Psoas muscle (tissue), 8 donors: ENCODE measurements at regions of chr3 and their contacts with region 1.

Region 1: GRCh38 chr3:186570096-186570940 is at the start of gene DNAJB11:
- DNase-seq: peak; percentile 99 to 100
- ATAC-seq: peak; percentile 92 to 95 (median 94)
- H3K4me3 ChIP-seq: peak within 1 kb of the TSS; percentile 87
- H3K27ac ChIP-seq: peak within 1 kb of the TSS; percentile 95
- H3K4me1 ChIP-seq: peaks cover 30% of the 10 kb centered on the region
- H3K27me3 ChIP-seq: no peaks in the 10 kb centered on the region
- CTCF ChIP-seq: no peak
- total RNA-seq, gene DNAJB11: 10.3 to 24.2 (median 17.4) TPM

Region 2: DNA sequence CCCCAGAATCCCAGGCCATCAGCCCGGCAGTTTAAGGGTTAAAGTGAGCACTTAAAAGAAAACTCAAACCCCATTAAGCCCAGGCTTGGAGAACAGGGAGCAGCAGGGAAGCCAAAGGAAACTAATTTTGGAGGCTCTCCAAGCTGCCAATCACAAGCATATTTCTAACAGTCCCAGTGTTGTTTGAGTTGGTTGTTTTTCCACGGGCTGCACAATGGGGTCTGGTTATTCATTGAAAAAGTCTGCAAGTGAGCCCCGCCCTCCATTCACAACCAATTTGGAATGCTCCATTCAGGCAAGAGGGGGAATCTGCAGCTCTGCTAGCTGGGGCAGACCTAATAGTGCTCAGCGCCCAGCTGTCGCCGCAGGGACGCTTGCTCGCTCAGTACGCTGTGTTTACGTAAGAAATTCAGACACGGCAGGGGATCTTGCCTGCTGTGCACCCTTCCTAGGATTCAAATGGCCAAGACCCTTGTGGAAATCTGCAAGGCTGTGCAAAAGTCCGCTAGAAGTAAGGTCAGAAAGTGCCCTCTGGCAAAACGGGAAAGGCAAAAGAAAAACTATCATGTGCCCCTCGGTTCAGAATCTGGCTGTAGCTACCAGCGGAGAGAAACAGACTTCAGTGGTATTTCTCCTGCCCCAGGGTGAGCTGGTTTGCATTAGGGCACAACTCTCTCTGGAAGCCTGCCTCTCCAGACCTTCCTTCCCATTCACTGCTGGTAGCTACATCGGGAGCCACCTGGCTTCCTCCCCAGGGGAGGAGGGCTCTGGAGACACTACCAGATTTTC is 472.5 kb before region 1 on chr3:
- intact Hi-C with region 1: loop called in 1 of 2 experiments (anchors 2 kb)
- DNase-seq: peak; percentile 29 to 73
- ATAC-seq: peak; percentile 77 to 87 (median 81)
- H3K4me3 ChIP-seq: peak overlapping the region; percentile 63
- H3K27ac ChIP-seq: peak overlapping the region; percentile 43
- H3K4me1 ChIP-seq: peaks cover 32% of the 10 kb centered on the region
- H3K27me3 ChIP-seq: no peaks in the 10 kb centered on the region
- CTCF ChIP-seq: no peak

Region 3: GRCh38 chr3:186783073-186783730 is 212.9 kb after region 1 on chr3 and contains the start of gene EIF4A2:
- intact Hi-C with region 1: loop called in 1 of 2 experiments (anchors 5 kb)
- DNase-seq: peak; percentile 93 to 94
- ATAC-seq: peak; percentile 87 to 90 (median 88)
- H3K4me3 ChIP-seq: peak within 1 kb of the TSS; percentile 93
- H3K27ac ChIP-seq: peak within 1 kb of the TSS; percentile 98
- H3K4me1 ChIP-seq: peaks cover 38% of the 10 kb centered on the region
- H3K27me3 ChIP-seq: no peaks in the 10 kb centered on the region
- CTCF ChIP-seq: no peak
- total RNA-seq, gene EIF4A2: 541 to 778 (median 587) TPM